ENCODE measurements at regions of chr9 and their contacts with region 1.

Region 1: DNA sequence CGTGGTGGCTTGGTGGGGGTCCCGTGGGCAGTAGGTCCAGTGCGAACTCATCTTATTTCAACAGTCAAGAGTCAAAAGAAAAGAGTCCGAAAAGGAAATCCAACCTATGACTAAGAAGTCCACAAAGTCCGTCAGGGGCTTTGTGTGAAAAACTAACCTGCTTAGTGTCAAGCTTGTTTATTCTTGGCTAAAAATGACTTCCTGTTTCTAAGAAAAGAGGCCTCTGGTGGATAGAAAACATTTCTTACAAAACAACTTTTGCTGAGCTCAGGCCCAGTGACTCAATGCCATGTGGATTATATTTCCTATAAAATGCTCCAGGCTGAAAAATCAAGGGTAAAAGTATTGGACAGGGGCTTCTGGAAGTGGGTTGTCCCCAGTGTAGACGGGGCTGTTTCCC is 105.9 kb downstream of the GADD45G start:
- DNase-seq: no peak
- H3K4me3 ChIP-seq: no peak overlapping the region
- H3K27ac ChIP-seq: no peak overlapping the region
- H3K4me1 ChIP-seq: peaks cover 0 to 6% (median 0%) of the 10 kb centered on the region in 4 donors
- H3K27me3 ChIP-seq: no peaks in the 10 kb centered on the region
- CTCF ChIP-seq: no peak

Region 2: DNA sequence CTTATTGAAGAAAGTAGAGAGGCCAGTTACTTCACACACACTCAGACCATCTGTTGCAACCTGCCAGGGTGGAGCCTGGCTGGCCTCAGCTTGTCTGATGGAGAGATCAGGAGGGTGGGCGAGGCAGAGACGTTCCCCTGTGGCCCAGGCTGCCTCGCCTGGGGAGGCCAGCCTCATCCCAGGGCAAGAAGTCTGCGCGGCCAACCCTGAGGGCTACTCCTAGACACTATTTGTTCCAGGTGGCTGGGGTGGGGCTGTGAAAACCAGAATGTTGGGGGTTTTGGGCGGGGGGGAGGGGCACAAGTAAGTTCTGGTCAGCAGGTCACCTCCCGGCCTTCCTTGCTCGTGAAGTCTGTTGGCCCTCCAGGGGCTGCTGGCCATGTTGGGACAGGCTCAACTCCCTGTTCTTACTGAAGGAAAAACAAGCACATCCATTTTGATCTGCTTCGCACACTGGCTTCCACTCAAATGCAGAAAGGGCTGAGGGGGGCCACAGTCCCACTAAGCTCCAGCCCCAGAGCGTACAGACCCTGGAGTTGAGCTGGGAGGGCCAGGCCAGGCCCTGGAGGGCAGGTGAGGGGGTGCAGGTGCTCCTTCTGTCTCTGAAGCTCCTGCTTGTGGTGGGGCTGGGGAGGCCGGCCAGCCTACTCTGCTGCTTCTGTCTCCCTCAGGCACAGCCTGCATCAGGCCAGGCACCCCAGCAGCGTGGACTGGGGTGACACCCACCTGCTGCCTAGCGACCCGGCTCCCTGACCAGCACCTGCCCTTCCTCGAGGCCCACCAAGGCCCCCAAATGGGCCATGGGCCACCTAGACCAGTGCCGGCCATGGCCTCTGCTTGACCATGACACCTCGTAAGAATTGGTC is 345.8 kb before region 1 on chr9:
- intact Hi-C with region 1: no loop called
- DNase-seq: peak; percentile 15 to 53
- H3K4me3 ChIP-seq: no peak overlapping the region
- H3K27ac ChIP-seq: no peak overlapping the region
- H3K4me1 ChIP-seq: no peaks in the 10 kb centered on the region
- H3K27me3 ChIP-seq: no peaks in the 10 kb centered on the region
- CTCF ChIP-seq: no peak

Region 3: DNA sequence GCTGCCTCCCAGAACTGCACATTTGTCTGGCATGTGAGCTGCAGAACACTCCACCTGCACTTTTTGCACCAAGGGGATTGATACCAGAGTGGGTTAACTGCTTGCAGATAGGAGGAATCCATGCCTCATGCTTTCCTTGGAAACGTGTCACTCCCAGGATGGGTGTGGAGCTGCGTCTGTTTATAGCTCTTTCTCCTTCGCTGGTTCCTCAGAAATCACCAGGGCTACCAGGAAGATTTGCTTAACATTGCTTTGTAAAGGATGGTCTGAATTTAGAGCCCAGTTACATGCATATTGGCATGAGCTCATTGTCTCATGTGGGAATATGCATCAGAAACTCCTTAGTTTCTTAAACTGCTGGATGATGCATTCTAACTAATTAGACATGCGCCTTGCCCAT is 128.8 kb after region 1 on chr9:
- intact Hi-C with region 1: loop called (anchors 10 kb)
- DNase-seq: no peak
- H3K4me3 ChIP-seq: no peak overlapping the region
- H3K27ac ChIP-seq: no peak overlapping the region
- H3K4me1 ChIP-seq: no peaks in the 10 kb centered on the region
- H3K27me3 ChIP-seq: no peaks in the 10 kb centered on the region
- CTCF ChIP-seq: no peak

Measured in tibial artery (tissue), 4 donors.